PC-3 (cell line): ENCODE measurements at regions of chrX and their contacts with region 1.

Region 1: GRCh38 chrX:47384502-47384901 is 14.1 kb downstream of the ZNF157 start:
- DNase-seq: peak; percentile 85
- ATAC-seq: peak; percentile 77
- H3K4me3 ChIP-seq: no peak overlapping the region
- H3K27ac ChIP-seq: no peak overlapping the region
- H3K4me1 ChIP-seq: no peaks in the 10 kb centered on the region
- H3K27me3 ChIP-seq: no peaks in the 10 kb centered on the region
- CTCF ChIP-seq: peak; percentile 87

Region 2: DNA sequence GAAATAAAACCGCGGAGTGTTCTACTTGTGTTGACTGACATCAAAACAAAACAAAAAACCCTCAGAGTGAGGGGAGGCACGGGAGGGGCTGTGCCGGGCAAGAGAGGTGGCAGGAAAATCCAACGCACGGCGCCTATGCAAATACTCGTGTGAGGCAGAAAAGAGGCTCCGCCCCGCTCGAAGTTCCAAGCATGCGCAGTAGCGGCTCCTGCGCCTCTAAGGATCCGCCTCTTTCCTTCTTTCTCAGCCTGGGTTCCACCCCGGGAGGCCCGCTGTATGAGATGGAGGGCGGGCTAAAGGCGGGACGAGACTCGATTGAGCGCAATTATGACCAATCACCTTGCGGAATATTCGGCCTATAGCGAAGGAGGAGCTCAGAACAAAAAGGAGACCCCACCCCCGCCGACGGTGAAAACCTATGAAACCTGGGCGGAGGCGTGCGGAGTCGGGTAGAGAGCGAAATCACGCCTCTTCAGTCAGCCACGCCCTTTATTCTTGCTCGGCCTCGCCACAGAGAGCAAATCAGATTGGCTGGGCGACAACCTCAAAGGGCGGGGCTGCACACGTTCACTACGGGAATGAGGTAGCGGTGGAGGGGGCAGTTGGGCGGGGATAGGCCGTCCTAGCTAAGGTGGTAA is 166.7 kb before region 1 on chrX:
- CTCF ChIA-PET with region 1: interaction called, 3 read pairs
- POLR2A ChIA-PET with region 1: no interaction called
- intact Hi-C with region 1: loop called (anchors 1 kb)
- DNase-seq: peak; percentile 98
- ATAC-seq: peak; percentile 83
- H3K4me3 ChIP-seq: peak overlapping the region; percentile 93
- H3K27ac ChIP-seq: peak overlapping the region; percentile 96
- H3K4me1 ChIP-seq: peaks cover 34% of the 10 kb centered on the region
- H3K27me3 ChIP-seq: no peaks in the 10 kb centered on the region
- CTCF ChIP-seq: no peak

Region 3: GRCh38 chrX:47278691-47279090 is 105.8 kb before region 1 on chrX:
- CTCF ChIA-PET with region 1: no interaction called
- POLR2A ChIA-PET with region 1: no interaction called
- intact Hi-C with region 1: no loop called
- DNase-seq: peak; percentile 70
- ATAC-seq: peak; percentile 73
- H3K4me3 ChIP-seq: no peak overlapping the region
- H3K27ac ChIP-seq: peak overlapping the region; percentile 44
- H3K4me1 ChIP-seq: peaks cover 5% of the 10 kb centered on the region
- H3K27me3 ChIP-seq: no peaks in the 10 kb centered on the region
- CTCF ChIP-seq: no peak

Region 4: DNA sequence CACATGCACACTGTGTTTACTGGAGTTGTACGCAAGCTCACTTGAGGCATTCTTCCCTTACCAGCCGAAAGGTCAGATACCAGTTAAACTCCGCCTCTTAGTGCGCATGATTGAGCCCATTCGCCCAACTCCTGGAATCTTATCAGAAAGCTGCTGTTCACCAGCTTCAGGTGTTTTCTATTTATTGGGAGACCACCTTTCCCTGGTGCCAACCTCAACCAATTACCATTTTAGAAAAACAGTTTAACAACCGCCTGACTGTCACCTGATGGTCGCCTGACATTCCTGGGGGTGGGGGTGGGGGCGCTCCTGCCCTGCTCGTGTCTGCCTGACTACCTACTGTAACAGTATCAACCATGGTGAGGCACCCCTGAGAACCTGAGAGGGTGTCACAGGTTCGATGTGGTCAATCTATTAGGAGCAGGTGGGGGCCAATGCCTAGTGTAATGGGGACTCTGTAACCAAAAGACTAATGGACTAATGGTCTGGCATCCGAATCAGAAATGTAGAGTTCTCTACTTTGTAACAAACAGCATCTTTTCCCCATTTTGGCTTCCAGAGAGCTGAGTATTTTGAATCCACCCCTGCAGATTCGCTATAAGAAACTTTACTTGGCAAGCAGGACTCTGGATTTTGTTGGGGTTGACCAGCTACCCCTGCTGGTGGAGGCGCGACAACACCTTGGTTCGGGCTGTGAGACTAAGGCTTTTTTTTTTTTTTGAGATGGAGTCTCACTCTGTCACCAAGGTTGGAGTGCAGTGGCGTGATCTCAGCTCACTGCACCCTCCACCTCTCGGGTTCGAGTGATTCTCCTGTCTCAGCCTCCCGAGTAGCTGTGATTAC is 72.3 kb before region 1 on chrX:
- CTCF ChIA-PET with region 1: no interaction called
- POLR2A ChIA-PET with region 1: no interaction called
- intact Hi-C with region 1: loop called (anchors 5 kb)
- DNase-seq: peak; percentile 74
- ATAC-seq: peak; percentile 65
- H3K4me3 ChIP-seq: peak overlapping the region; percentile 51; the same call in 1 of the 2 replicates
- H3K27ac ChIP-seq: peak overlapping the region; percentile 32; the same call in 1 of the 2 replicates
- H3K4me1 ChIP-seq: peaks cover 4% of the 10 kb centered on the region; the same call in 1 of the 2 replicates
- H3K27me3 ChIP-seq: no peaks in the 10 kb centered on the region
- CTCF ChIP-seq: peak; percentile 75

Region 5: GRCh38 chrX:47482512-47483309 is 98.2 kb after region 1 on chrX and contains the start of gene ZNF41:
- CTCF ChIA-PET with region 1: no interaction called
- POLR2A ChIA-PET with region 1: no interaction called
- intact Hi-C with region 1: loop called (anchors 5 kb)
- DNase-seq: peak; percentile 90
- ATAC-seq: peak; percentile 92
- H3K4me3 ChIP-seq: peak within 1 kb of the TSS; percentile 92
- H3K27ac ChIP-seq: peak within 1 kb of the TSS; percentile 86
- H3K4me1 ChIP-seq: peaks cover 25% of the 10 kb centered on the region
- H3K27me3 ChIP-seq: no peaks in the 10 kb centered on the region
- CTCF ChIP-seq: no peak
- total RNA-seq, gene ZNF41: 11.1 and 11.3 TPM in 2 replicates